Caco-2 (cell line): ENCODE measurements at regions of chr7 and their contacts with region 1.

Region 1: GRCh38 chr7:103413407-103413806 is 32.6 kb downstream of the SLC26A5 start:
- DNase-seq: no peak
- H3K4me3 ChIP-seq: no peak overlapping the region
- H3K4me3 Mint-ChIP-seq: no peak overlapping the region
- H3K27ac Mint-ChIP-seq: no peak overlapping the region
- H3K4me1 ChIP-seq: no peaks in the 10 kb centered on the region
- H3K4me1 Mint-ChIP-seq: no peaks in the 10 kb centered on the region
- H3K27me3 ChIP-seq: no peaks in the 10 kb centered on the region
- H3K27me3 Mint-ChIP-seq: peaks cover 2% of the 10 kb centered on the region
- CTCF ChIP-seq: no peak

Region 2: GRCh38 chr7:103106005-103106702 is 307.3 kb before region 1 on chr7:
- CTCF ChIA-PET with region 1: no interaction called
- POLR2A ChIA-PET with region 1: no interaction called
- intact Hi-C with region 1: no loop called
- DNase-seq: peak in 1 of 2 experiments; percentile 30
- H3K4me3 ChIP-seq: no peak overlapping the region
- H3K4me3 Mint-ChIP-seq: no peak overlapping the region
- H3K27ac Mint-ChIP-seq: no peak overlapping the region
- H3K4me1 ChIP-seq: no peaks in the 10 kb centered on the region
- H3K4me1 Mint-ChIP-seq: no peaks in the 10 kb centered on the region
- H3K27me3 ChIP-seq: no peaks in the 10 kb centered on the region
- H3K27me3 Mint-ChIP-seq: no peaks in the 10 kb centered on the region
- CTCF ChIP-seq: no peak

Region 3: GRCh38 chr7:103373866-103374643 is 39.4 kb before region 1 on chr7:
- CTCF ChIA-PET with region 1: no interaction called
- POLR2A ChIA-PET with region 1: no interaction called
- intact Hi-C with region 1: loop called (anchors 5 kb)
- DNase-seq: no peak
- H3K4me3 ChIP-seq: no peak overlapping the region
- H3K4me3 Mint-ChIP-seq: no peak overlapping the region
- H3K27ac Mint-ChIP-seq: no peak overlapping the region
- H3K4me1 ChIP-seq: no peaks in the 10 kb centered on the region
- H3K4me1 Mint-ChIP-seq: no peaks in the 10 kb centered on the region
- H3K27me3 ChIP-seq: no peaks in the 10 kb centered on the region
- H3K27me3 Mint-ChIP-seq: no peaks in the 10 kb centered on the region
- CTCF ChIP-seq: no peak